ENCODE measurements at regions of chr19 and their contacts with region 1.

Region 1: DNA sequence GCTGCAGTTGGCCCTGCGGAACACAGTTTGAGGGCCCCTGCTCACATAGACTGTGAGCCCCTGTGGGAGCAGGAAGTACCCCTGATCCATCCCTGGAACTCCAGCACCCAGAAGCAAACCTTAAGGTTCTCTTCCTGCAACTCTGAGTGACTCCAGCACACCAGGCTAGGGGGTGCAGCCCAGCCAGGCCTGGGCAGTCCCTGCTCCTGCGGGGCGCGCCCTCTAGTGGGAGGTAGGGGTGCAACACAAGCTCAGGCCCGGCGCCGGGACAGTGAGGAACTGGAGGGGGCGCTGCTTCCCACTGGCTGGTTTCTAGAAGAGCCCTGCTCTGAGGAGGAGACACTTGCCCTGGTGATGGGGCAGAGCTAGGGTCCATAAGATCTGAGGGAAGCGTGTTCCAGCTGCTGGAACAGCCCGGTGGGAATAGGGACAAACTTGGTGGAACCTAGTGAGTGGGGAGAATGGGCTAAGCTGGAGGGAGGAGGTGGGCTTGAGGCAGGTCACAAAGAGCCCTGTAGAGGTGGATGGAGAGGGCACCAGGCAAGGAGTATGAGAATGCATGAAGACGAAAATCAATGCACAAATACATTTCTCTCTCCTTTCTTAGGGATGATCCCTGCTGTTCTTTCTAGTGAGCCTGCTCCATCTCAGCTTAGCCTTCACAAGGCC is 5.0 kb downstream of the ZSCAN5A start:
- DNase-seq: peak; percentile 78
- ATAC-seq: peak; percentile 71
- H3K4me3 Mint-ChIP-seq: no peak overlapping the region
- H3K27ac Mint-ChIP-seq: no peak overlapping the region
- H3K4me1 Mint-ChIP-seq: peaks cover 20% of the 10 kb centered on the region
- H3K27me3 Mint-ChIP-seq: no peaks in the 10 kb centered on the region
- CTCF ChIP-seq: peak; percentile 90

Region 2: DNA sequence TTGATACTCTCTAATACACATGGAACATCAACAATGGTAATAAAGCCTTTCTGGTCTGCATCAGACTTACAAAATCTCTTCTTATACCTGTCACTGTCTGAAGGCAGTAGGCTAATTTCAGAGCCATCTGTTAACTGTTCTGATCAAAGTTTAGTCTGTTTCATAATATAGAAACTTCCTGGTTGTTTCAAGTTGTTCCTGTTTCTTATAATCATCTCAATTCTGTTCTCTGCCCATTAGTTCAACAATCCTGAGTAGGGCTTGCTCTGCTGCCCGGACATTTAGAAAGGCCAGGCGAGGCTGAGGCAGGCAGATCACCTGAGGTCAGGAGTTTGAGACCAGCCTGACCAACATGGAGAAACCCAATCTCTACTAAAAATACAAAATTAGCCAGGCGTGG is 10.3 kb after region 1 on chr19:
- CTCF ChIA-PET with region 1: interaction called, 10 read pairs
- POLR2A ChIA-PET with region 1: no interaction called
- intact Hi-C with region 1: no loop called
- DNase-seq: no peak
- ATAC-seq: no peak
- H3K4me3 Mint-ChIP-seq: no peak overlapping the region
- H3K27ac Mint-ChIP-seq: no peak overlapping the region
- H3K4me1 Mint-ChIP-seq: peaks cover 5% of the 10 kb centered on the region
- H3K27me3 Mint-ChIP-seq: peaks cover 2% of the 10 kb centered on the region
- CTCF ChIP-seq: no peak